GM12878 (cell line): ENCODE measurements at regions of chr1 and their contacts with region 1.

Region 1: DNA sequence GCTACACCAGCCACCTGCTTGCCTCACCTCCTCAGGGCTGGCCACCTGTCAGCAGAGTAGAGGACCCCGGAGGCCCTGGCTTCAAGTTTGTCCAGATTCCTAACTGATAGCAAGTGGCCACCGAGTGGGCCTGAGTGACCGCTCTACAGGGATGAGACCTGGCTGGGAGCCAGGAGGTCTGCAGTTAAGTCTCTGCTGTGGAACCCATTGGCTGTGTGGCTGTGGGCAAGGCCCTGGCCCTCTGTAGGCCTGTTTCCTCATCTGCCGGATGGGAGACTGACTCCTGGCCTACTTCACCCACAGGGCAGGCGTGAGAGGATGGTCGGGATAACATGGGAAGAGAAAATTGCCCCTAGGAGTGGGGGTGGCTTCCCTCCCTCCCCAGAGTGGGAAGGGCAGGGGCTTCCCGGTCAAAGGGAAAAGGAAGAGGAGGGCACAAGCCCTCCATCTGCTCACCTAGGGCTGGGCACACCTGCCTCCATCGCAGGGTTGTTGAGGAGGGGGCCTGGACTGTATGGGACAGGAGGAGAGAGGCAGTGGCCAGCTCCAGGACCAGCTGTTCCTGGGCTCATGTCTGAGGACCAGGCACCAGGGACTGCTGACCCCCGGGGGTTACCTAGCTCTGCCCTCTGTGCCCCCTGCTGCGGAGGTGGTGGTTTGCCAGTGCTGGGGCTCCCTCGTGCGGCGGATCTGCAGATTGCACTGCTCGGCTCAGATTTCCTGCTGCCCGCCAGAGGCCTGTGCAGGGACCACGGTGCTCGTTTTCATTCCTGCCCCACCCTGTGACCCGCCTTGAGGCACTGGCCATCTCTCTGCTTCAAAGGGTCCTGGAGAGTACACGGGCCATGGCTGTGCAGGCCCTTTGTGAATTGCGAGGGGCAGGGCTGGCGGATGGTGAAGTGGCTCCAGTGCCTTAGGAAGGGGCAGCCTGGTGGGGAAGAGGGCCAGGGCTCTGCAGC is 9.1 kb upstream of the MTFR1L start:
- DNase-seq: no peak
- ATAC-seq: peak; percentile 91
- H3K4me3 ChIP-seq: no peak overlapping the region
- H3K27ac ChIP-seq: no peak overlapping the region
- H3K4me1 ChIP-seq: peaks cover 7% of the 10 kb centered on the region
- H3K27me3 ChIP-seq: no peaks in the 10 kb centered on the region
- CTCF ChIP-seq: peak; percentile 86 to 97 (median 95); a peak in 5 of 6 replicates
- EP300 ChIP-seq: no peak
- POLR2A ChIP-seq: no peak
- RAD21 ChIP-seq: peak; percentile 94

Region 2: DNA sequence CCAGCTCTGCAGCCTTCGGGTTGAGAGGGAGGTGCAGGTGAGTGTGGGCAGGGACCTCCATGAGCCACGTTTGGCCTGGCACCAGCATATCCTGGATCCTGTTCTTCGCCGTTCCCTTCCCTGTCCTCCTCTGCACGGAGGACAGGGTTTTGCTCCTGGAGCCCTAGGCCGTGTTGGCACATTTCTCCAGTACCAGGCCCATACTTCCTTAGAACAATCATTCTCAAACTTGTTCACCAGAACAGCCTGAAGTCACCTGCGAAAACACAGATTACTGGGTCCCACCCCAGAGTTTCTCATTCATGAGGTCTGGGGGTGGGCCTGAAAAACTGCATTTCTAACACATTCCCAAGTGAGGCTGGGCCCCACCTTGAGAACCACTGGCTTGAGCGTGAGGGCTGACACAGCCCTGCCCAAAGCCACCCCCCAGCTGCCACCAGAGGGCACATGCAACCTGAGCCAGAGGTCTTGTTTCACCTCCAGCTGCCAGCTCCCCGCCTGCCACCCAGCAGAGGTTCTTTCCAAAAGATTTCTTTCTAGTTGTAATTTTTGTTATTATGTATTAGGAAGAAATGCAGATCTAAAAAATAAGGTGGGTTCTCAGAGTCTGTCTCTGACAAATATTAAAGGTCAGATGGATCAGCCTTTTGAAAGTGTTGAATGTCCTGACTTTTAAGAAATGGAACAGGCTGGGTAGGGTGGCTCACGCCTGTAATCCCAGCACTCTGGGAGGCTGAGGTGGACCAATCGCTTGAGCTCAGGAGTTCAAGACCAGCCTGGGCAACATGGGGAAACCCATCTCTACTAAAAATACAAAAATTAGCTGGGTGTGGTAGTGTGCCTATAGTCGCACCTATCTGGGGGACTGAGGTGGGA is 306.8 kb before region 1 on chr1:
- CTCF ChIA-PET with region 1: interaction called, 38 read pairs
- POLR2A ChIA-PET with region 1: no interaction called
- RAD21 ChIA-PET with region 1: interaction called, 4 read pairs
- SMC1A ChIA-PET with region 1: interaction called, 14 read pairs
- in situ Hi-C with region 1: no loop called
- intact Hi-C with region 1: loop called (anchors 1 kb)
- DNase-seq: no peak
- ATAC-seq: peak; percentile 98
- H3K4me3 ChIP-seq: no peak overlapping the region
- H3K27ac ChIP-seq: no peak overlapping the region
- H3K4me1 ChIP-seq: no peaks in the 10 kb centered on the region
- H3K27me3 ChIP-seq: no peaks in the 10 kb centered on the region
- CTCF ChIP-seq: peak; percentile 56 to 72 (median 71)
- EP300 ChIP-seq: no peak
- POLR2A ChIP-seq: no peak
- RAD21 ChIP-seq: peak; percentile 40; the same call in 1 of the 2 replicates

Region 3: DNA sequence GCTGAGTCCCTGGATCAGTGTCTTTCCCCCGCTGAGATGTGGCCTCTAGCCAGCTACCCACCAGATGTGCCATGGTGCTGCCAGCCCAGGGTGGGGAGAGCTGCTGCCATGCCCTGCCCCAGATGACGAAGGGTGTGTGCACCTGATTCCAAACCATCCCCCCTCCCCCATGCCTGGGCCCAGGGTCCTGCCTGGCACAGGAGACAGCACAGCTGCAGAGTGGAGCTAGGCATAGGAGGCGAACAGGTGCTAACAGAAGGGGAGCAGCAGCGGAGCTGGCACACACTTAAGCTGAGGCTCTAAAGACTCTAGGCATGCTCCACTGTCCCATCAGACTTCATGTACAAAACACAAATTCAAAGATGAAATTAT is 276.2 kb before region 1 on chr1:
- CTCF ChIA-PET with region 1: interaction called, 11 read pairs
- POLR2A ChIA-PET with region 1: no interaction called
- RAD21 ChIA-PET with region 1: no interaction called
- SMC1A ChIA-PET with region 1: no interaction called
- in situ Hi-C with region 1: no loop called
- intact Hi-C with region 1: no loop called
- DNase-seq: no peak
- ATAC-seq: no peak
- H3K4me3 ChIP-seq: no peak overlapping the region
- H3K27ac ChIP-seq: no peak overlapping the region
- H3K4me1 ChIP-seq: no peaks in the 10 kb centered on the region
- H3K27me3 ChIP-seq: peaks cover 1 to 2% of the 10 kb centered on the region in 2 experiments; a peak in 2 of 4 replicates
- CTCF ChIP-seq: no peak
- EP300 ChIP-seq: no peak
- POLR2A ChIP-seq: no peak
- RAD21 ChIP-seq: no peak

Region 4: GRCh38 chr1:25758466-25759077 is 52.0 kb before region 1 on chr1:
- CTCF ChIA-PET with region 1: interaction called, 14 read pairs
- POLR2A ChIA-PET with region 1: no interaction called
- RAD21 ChIA-PET with region 1: interaction called, 5 read pairs
- SMC1A ChIA-PET with region 1: no interaction called
- in situ Hi-C with region 1: no loop called
- intact Hi-C with region 1: no loop called
- DNase-seq: no peak
- ATAC-seq: no peak
- H3K4me3 ChIP-seq: no peak overlapping the region
- H3K27ac ChIP-seq: no peak overlapping the region
- H3K4me1 ChIP-seq: no peaks in the 10 kb centered on the region
- H3K27me3 ChIP-seq: peaks cover 0 to 5% of the 10 kb centered on the region in 2 experiments; a peak in 3 of 4 replicates
- CTCF ChIP-seq: no peak
- EP300 ChIP-seq: no peak
- POLR2A ChIP-seq: no peak
- RAD21 ChIP-seq: no peak

Region 5: GRCh38 chr1:25997828-25998761 is 187.5 kb after region 1 on chr1 and contains the start of gene PAFAH2:
- CTCF ChIA-PET with region 1: interaction called, 16 read pairs
- POLR2A ChIA-PET with region 1: no interaction called
- RAD21 ChIA-PET with region 1: interaction called, 13 read pairs
- SMC1A ChIA-PET with region 1: interaction called, 5 read pairs
- in situ Hi-C with region 1: no loop called
- intact Hi-C with region 1: no loop called
- DNase-seq: peak; percentile 99
- ATAC-seq: peak; percentile 99
- H3K4me3 ChIP-seq: peak within 1 kb of the TSS; percentile 69
- H3K27ac ChIP-seq: peak within 1 kb of the TSS; percentile 67
- H3K4me1 ChIP-seq: peaks cover 12% of the 10 kb centered on the region
- H3K27me3 ChIP-seq: no peaks in the 10 kb centered on the region
- CTCF ChIP-seq: peak; percentile 93 to 99 (median 99)
- EP300 ChIP-seq: peak in 1 of 2 experiments; percentile 53; a peak in 1 of 4 replicates
- POLR2A ChIP-seq: no peak
- RAD21 ChIP-seq: peak; percentile 96
- polyA plus RNA-seq, gene PAFAH2: 3.0 to 4.0 TPM